Calu3 (cell line): ENCODE measurements at regions of chr5 and their contacts with region 1.

Region 1: GRCh38 chr5:61331407-61332357 is at the start of gene ZSWIM6:
- DNase-seq: peak; percentile 97
- H3K4me3 Mint-ChIP-seq: peak within 1 kb of the TSS; percentile 84
- H3K27ac Mint-ChIP-seq: peak within 1 kb of the TSS; percentile 86
- H3K4me1 Mint-ChIP-seq: peaks cover 52% of the 10 kb centered on the region
- H3K27me3 Mint-ChIP-seq: no peaks in the 10 kb centered on the region
- CTCF ChIP-seq: no peak
- total RNA-seq, gene ZSWIM6: 13.2 and 14.7 TPM in 2 replicates

Region 2: DNA sequence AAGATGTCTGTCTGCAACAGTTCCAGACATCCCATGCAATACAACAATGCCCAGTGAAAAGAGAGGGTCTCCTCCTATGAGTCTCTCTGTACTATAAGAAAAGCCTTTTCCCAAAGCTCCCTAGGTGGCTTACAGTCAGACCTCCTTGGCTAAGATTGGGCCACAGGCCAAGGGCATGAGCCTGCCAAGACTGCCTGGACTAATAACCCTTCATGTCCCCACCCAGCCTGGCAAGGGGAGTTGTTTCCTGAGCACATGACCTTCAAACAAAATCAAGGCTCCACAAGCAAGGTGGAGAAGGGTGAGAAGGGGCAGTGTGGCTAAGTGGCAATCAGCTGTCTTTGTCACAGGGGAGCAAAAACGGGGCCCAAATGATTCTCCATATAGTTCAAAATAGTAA is 75.2 kb before region 1 on chr5:
- CTCF ChIA-PET with region 1: interaction called, 6 read pairs
- intact Hi-C with region 1: loop called (anchors 5 kb)
- DNase-seq: peak; percentile 42
- H3K4me3 Mint-ChIP-seq: no peak overlapping the region
- H3K27ac Mint-ChIP-seq: peak overlapping the region; percentile 55
- H3K4me1 Mint-ChIP-seq: peaks cover 53% of the 10 kb centered on the region
- H3K27me3 Mint-ChIP-seq: no peaks in the 10 kb centered on the region
- CTCF ChIP-seq: no peak

Region 3: DNA sequence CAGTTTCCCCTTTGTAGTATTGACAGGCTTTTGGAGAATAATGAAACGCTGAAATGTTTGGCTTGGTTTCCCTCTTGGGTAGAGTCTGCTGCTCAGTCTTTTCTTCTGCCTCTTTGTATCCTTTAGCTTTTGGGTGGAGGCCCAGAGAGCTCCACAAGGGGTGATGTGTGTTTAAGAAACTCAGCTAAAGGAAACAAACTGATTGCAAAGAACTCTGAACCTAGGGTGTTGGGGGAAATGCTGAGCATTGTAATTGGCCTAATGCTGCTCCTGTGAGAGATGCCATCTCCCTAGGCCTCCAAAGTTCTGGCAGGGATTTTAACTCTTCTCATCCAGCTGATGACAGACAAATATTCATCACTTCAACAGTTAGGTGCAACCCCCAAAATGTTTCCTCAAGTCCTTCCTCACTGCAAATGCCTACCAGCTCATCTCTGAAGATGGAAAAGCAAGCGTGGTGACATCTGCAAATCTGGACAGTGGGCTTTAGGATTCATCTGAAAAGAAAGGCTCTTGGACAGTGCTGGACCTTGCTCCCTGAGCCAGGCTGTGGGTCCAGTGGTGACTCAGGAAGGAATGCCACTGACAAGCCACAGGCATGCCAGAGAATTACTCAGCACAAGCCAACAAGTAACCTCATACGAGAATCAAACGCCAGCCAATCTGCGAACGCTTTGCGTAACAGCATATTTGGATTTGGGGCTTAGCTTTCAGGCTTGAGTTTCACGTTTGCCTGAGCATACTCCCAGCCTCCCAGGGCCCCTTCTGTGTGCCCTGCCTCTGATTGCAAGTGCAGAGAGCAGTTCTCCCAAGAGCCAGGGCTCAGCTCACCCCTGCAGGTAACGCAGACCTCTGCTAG is 30.1 kb before region 1 on chr5:
- CTCF ChIA-PET with region 1: interaction called, 15 read pairs
- intact Hi-C with region 1: loop called (anchors 2 kb)
- DNase-seq: peak; percentile 86
- H3K4me3 Mint-ChIP-seq: peak overlapping the region; percentile 68
- H3K27ac Mint-ChIP-seq: peak overlapping the region; percentile 92
- H3K4me1 Mint-ChIP-seq: peaks cover 64% of the 10 kb centered on the region
- H3K27me3 Mint-ChIP-seq: no peaks in the 10 kb centered on the region
- CTCF ChIP-seq: no peak

Region 4: GRCh38 chr5:61658592-61659008 is 326.9 kb after region 1 on chr5:
- CTCF ChIA-PET with region 1: no interaction called
- intact Hi-C with region 1: loop called (anchors 5 kb)
- DNase-seq: peak; percentile 92
- H3K4me3 Mint-ChIP-seq: no peak overlapping the region
- H3K27ac Mint-ChIP-seq: no peak overlapping the region
- H3K4me1 Mint-ChIP-seq: no peaks in the 10 kb centered on the region
- H3K27me3 Mint-ChIP-seq: peaks cover 51% of the 10 kb centered on the region
- CTCF ChIP-seq: peak; percentile 96